ENCODE measurements at regions of chr4 and their contacts with region 1.

Region 1: GRCh38 chr4:21134994-21135393 is 434.7 kb downstream of the PACRGL start:
- DNase-seq: no peak
- ATAC-seq: no peak
- H3K4me3 ChIP-seq: no peak overlapping the region
- H3K27ac ChIP-seq: no peak overlapping the region
- H3K4me1 ChIP-seq: no peaks in the 10 kb centered on the region
- H3K27me3 ChIP-seq: no peaks in the 10 kb centered on the region
- CTCF ChIP-seq: no peak

Region 2: GRCh38 chr4:20773144-20773997 is 361.6 kb before region 1 on chr4:
- intact Hi-C with region 1: loop called in 1 of 2 experiments (anchors 2 kb)
- DNase-seq: peak in 1 of 2 donors; percentile 12
- ATAC-seq: no peak
- H3K4me3 ChIP-seq: no peak overlapping the region
- H3K27ac ChIP-seq: no peak overlapping the region
- H3K4me1 ChIP-seq: no peaks in the 10 kb centered on the region
- H3K27me3 ChIP-seq: no peaks in the 10 kb centered on the region
- CTCF ChIP-seq: peak; percentile 35